ENCODE measurements at regions of chr1 and their contacts with region 1.

Region 1: GRCh38 chr1:160681067-160681890 is 30.3 kb downstream of the CD48 start:
- DNase-seq: peak; percentile 79 to 94 (median 86)
- ATAC-seq: peak; percentile 88 to 94
- H3K4me3 Mint-ChIP-seq: peak overlapping the region in 4 of 10 donors; percentile 36 to 85 (median 48)
- H3K27ac Mint-ChIP-seq: peak overlapping the region; percentile 79 to 95 (median 88)
- H3K4me1 Mint-ChIP-seq: peaks cover 31 to 65% (median 56%) of the 10 kb centered on the region in 4 donors
- H3K27me3 Mint-ChIP-seq: no peaks in the 10 kb centered on the region

Region 2: GRCh38 chr1:160711602-160712311 is 30.5 kb after region 1 on chr1 and contains the start of gene CD48:
- POLR2A ChIA-PET with region 1: interaction called, 52 read pairs
- DNase-seq: peak; percentile 26 to 88 (median 64)
- ATAC-seq: peak; percentile 60 to 67
- H3K4me3 Mint-ChIP-seq: no peak within 1 kb of the TSS
- H3K27ac Mint-ChIP-seq: peak within 1 kb of the TSS in 2 of 10 donors; percentile 87 to 95
- H3K4me1 Mint-ChIP-seq: peaks cover 11 to 49% (median 38%) of the 10 kb centered on the region in 4 donors
- H3K27me3 Mint-ChIP-seq: no peaks in the 10 kb centered on the region
- polyA plus RNA-seq, gene CD48: 186 to 213 (median 200) TPM